Testis (tissue), 5 donors: ENCODE measurements at regions of chr3 and their contacts with region 1.

Region 1: GRCh38 chr3:129942296-129942695 is 32.2 kb upstream of the TRH start:
- DNase-seq: peak; percentile 79
- H3K4me3 ChIP-seq: no peak overlapping the region
- H3K27ac ChIP-seq: no peak overlapping the region
- H3K4me1 ChIP-seq: peaks cover 4% of the 10 kb centered on the region
- H3K27me3 ChIP-seq: no peaks in the 10 kb centered on the region
- CTCF ChIP-seq: peak; percentile 75 to 85 (median 78)
- POLR2A ChIP-seq: no peak

Region 2: DNA sequence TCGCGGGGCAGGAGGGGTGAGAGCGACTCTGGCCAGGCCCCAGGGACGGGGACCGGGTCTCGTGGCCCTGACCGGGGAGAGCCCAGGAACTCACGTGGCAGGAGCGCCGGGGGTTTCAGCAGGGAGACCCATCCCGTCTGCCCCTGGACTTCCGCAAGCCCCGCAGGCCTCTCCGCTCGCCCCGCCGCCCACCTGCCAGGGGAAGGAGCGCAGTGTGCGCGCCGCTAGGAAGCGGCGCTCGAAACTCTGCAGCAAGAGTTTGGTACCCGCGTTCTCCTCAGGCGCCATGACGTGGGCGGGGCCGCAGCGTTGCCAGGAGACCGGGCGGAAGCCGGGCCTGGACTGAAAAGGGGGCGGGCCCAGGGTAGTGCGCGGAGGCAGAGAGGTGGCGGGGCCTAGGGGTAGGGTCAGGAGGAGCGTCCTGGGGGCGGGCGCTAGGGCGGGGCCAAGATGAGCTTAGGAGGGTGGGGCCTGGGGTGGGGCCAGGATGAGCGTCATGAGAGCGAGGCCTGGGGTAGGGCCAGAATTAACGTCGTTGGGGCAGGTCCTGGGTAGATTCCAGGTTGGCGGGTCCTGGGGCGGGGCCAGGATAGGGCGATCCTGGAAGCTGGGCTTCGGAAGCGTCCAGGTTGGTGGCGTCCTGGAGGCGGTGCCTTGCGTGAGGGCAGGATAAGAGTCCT is 169.0 kb after region 1 on chr3:
- intact Hi-C with region 1: loop called (anchors 10 kb)
- DNase-seq: peak; percentile 99
- H3K4me3 ChIP-seq: peak overlapping the region; percentile 74 to 75
- H3K27ac ChIP-seq: peak overlapping the region; percentile 67 to 93
- H3K4me1 ChIP-seq: no peaks in the 10 kb centered on the region
- H3K27me3 ChIP-seq: no peaks in the 10 kb centered on the region
- CTCF ChIP-seq: no peak
- POLR2A ChIP-seq: no peak